Right cardiac atrium (tissue), 5 donors: ENCODE measurements at regions of chr2 and their contacts with region 1.

Region 1: DNA sequence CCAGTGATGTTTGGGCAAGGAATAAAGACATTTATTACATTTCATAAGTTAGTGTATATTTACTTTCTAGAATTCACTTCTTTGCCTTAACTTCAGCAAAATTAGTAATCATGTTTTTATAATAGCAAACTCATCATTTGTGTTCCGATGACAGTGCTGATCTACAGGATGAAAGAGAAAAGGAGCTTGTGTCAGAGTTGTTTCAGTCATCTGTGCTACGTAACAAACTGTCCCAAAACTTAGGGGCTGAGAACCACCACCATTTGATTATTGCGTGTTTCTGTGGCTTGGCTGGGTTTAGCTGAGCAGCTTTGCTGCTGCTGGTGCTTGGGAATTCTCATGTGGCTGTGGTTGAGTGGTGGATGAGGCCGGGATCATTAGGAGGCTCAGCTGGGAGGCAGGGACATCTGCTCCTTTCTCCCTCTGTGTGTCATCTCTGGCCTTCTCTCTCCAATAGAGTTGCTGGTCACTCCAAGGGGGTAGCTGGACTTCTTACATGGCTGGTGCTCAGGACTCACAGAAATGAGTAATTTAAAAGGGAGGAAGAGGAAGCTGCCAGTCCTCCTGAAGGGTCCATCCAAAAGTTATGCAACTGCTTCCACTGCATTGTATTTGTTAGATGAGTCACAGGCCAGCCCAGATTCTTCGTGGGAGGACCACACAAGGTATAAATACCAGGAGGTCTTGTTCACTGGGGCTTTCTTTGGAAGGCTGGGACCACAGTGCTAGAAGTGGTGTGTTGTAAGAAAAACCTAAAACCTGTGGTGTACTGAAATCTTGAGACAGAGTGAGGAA is 43.4 kb upstream of the HAAO start:
- DNase-seq: peak in 2 of 3 donors; percentile 30 to 61
- ATAC-seq: peak; percentile 55 to 92
- H3K4me3 ChIP-seq: no peak overlapping the region
- H3K27ac ChIP-seq: peak overlapping the region; percentile 80
- H3K4me1 ChIP-seq: peaks cover 9% of the 10 kb centered on the region
- H3K27me3 ChIP-seq: no peaks in the 10 kb centered on the region

Region 2: GRCh38 chr2:42931146-42931817 is 95.5 kb after region 1 on chr2:
- intact Hi-C with region 1: loop called in 1 of 4 experiments (anchors 10 kb)
- DNase-seq: peak in 1 of 3 donors; percentile 36
- ATAC-seq: no peak
- H3K4me3 ChIP-seq: no peak overlapping the region
- H3K27ac ChIP-seq: peak overlapping the region; percentile 33
- H3K4me1 ChIP-seq: peaks cover 41% of the 10 kb centered on the region
- H3K27me3 ChIP-seq: no peaks in the 10 kb centered on the region

Region 3: GRCh38 chr2:43239981-43240761 is 404.4 kb after region 1 on chr2:
- intact Hi-C with region 1: loop called in 1 of 4 experiments (anchors 10 kb)
- DNase-seq: no peak
- ATAC-seq: peak in 1 of 2 donors; percentile 15
- H3K4me3 ChIP-seq: no peak overlapping the region
- H3K27ac ChIP-seq: peak overlapping the region; percentile 28
- H3K4me1 ChIP-seq: peaks cover 2% of the 10 kb centered on the region
- H3K27me3 ChIP-seq: no peaks in the 10 kb centered on the region

Region 4: GRCh38 chr2:43542285-43542937 is 706.6 kb after region 1 on chr2:
- intact Hi-C with region 1: loop called in 1 of 4 experiments (anchors 10 kb)
- DNase-seq: no peak
- ATAC-seq: peak; percentile 23 to 27
- H3K4me3 ChIP-seq: no peak overlapping the region
- H3K27ac ChIP-seq: no peak overlapping the region
- H3K4me1 ChIP-seq: no peaks in the 10 kb centered on the region
- H3K27me3 ChIP-seq: no peaks in the 10 kb centered on the region